CD4-positive, alpha-beta T cell (primary cell): ENCODE measurements at regions of chr19 and their contacts with region 1.

Region 1: DNA sequence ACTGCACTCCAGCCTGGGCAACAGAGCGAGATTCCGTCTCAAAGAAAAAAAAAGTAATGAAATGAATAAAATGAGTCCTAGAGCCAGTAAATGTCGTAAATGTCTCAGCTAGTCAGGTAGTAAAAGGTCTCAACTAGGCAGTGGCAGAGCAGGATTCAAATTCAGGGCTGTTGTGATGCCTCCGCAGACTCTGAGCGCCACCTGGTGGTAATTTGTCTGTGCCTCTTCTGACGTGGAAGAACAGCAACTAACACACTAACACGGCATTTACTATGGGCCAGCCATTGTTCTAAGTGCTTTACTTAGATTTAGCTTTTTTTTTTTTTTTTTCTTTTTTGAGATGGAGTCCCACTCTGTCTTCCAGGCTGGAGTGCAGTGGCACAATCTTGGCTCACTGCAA is 30.2 kb downstream of the CYP2F1 start:
- DNase-seq: peak; percentile 80 to 95 (median 86)
- ATAC-seq: peak; percentile 97
- H3K4me3 ChIP-seq: no peak overlapping the region
- H3K4me3 Mint-ChIP-seq: no peak overlapping the region
- H3K27ac ChIP-seq: no peak overlapping the region
- H3K27ac Mint-ChIP-seq: no peak overlapping the region
- H3K4me1 ChIP-seq: no peaks in the 10 kb centered on the region
- H3K4me1 Mint-ChIP-seq: peaks cover 4% of the 10 kb centered on the region
- H3K27me3 ChIP-seq: no peaks in the 10 kb centered on the region
- H3K27me3 Mint-ChIP-seq: peaks cover 24% of the 10 kb centered on the region
- CTCF ChIP-seq: peak; percentile 84

Region 2: GRCh38 chr19:40813182-40813958 is 331.0 kb before region 1 on chr19:
- CTCF ChIA-PET with region 1: no interaction called
- POLR2A ChIA-PET with region 1: no interaction called
- intact Hi-C with region 1: loop called in 1 of 2 experiments (anchors 5 kb)
- DNase-seq: no peak
- ATAC-seq: no peak
- H3K4me3 ChIP-seq: no peak overlapping the region
- H3K4me3 Mint-ChIP-seq: peak overlapping the region; percentile 95
- H3K27ac ChIP-seq: no peak overlapping the region
- H3K27ac Mint-ChIP-seq: peak overlapping the region; percentile 90
- H3K4me1 ChIP-seq: peaks cover 49% of the 10 kb centered on the region
- H3K4me1 Mint-ChIP-seq: peaks cover 41% of the 10 kb centered on the region
- H3K27me3 ChIP-seq: no peaks in the 10 kb centered on the region
- H3K27me3 Mint-ChIP-seq: no peaks in the 10 kb centered on the region
- CTCF ChIP-seq: no peak

Region 3: DNA sequence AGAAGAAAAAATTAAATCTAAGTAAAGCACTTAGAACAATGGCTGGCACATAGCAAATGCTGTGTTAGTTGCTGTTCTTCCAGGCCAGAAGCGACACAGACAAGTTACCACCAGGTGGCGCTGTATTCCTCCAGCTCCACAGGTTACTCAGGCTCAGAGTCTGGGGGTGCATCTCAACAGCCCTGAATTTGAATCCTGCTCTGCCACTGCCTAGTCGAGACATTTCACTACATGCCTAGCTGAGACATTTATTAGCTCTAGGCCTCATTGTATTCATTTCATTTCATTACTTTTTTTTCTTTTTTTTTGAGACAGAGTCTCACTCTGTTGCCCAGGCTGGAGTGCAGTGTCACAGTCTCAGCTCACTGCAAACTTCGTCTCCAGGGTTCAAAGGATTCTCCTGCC is 169.8 kb before region 1 on chr19:
- CTCF ChIA-PET with region 1: interaction called, 9 read pairs
- POLR2A ChIA-PET with region 1: interaction called, 4 read pairs
- intact Hi-C with region 1: loop called (anchors 1 kb)
- DNase-seq: peak; percentile 68 to 92 (median 76)
- ATAC-seq: peak; percentile 78
- H3K4me3 ChIP-seq: no peak overlapping the region
- H3K4me3 Mint-ChIP-seq: no peak overlapping the region
- H3K27ac ChIP-seq: no peak overlapping the region
- H3K27ac Mint-ChIP-seq: no peak overlapping the region
- H3K4me1 ChIP-seq: peaks cover 20% of the 10 kb centered on the region
- H3K4me1 Mint-ChIP-seq: peaks cover 32% of the 10 kb centered on the region
- H3K27me3 ChIP-seq: peaks cover 0 to 2% of the 10 kb centered on the region in 2 experiments
- H3K27me3 Mint-ChIP-seq: peaks cover 21% of the 10 kb centered on the region
- CTCF ChIP-seq: peak; percentile 99

Region 4: GRCh38 chr19:41123716-41124294 is 20.6 kb before region 1 on chr19:
- CTCF ChIA-PET with region 1: interaction called, 15 read pairs
- POLR2A ChIA-PET with region 1: no interaction called
- intact Hi-C with region 1: loop called (anchors 1 kb)
- DNase-seq: no peak
- ATAC-seq: no peak
- H3K4me3 ChIP-seq: no peak overlapping the region
- H3K4me3 Mint-ChIP-seq: no peak overlapping the region
- H3K27ac ChIP-seq: no peak overlapping the region
- H3K27ac Mint-ChIP-seq: peak overlapping the region; percentile 53
- H3K4me1 ChIP-seq: peaks cover 40% of the 10 kb centered on the region
- H3K4me1 Mint-ChIP-seq: peaks cover 36% of the 10 kb centered on the region
- H3K27me3 ChIP-seq: no peaks in the 10 kb centered on the region
- H3K27me3 Mint-ChIP-seq: no peaks in the 10 kb centered on the region
- CTCF ChIP-seq: no peak